ENCODE measurements at regions of chr6 and their contacts with region 1.

Region 1: DNA sequence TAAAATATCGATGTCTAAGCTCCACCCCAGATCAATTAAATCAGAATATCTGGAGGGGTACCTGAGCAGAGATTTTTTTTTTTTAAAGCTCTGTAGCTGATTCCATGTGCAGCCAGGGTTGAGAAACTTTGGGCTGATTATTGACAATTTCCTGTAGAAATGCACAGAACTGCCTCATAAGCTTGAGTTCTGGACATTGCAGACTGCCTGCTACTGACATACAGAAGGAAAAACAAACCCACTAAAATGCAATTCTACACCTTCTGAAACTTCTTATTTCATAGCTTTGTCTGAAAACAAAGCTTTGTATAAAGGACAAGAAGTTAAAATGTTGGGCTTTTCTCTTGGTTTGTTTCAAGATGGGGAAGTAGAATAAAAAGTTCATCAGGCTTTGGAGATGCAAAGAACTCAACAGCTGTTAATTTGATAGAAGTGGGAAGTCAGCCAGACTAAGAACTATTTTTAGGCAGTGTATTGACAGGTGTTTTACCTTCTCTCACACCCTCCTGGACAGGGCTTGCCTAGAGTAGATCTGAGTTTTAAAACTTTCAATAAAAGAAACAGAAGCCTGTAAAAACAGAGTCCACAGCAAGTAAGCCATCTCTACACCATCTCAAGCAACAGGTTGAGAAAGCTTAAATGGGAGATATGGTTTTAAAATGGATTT is 147.7 kb downstream of the KCNQ5 start:
- DNase-seq: no peak
- ATAC-seq: peak; percentile 58
- H3K4me3 ChIP-seq: no peak overlapping the region
- H3K27ac ChIP-seq: no peak overlapping the region
- H3K4me1 ChIP-seq: peaks cover 11% of the 10 kb centered on the region
- H3K27me3 ChIP-seq: no peaks in the 10 kb centered on the region
- CTCF ChIP-seq: no peak
- EP300 ChIP-seq: no peak
- POLR2A ChIP-seq: no peak
- RAD21 ChIP-seq: no peak

Region 2: DNA sequence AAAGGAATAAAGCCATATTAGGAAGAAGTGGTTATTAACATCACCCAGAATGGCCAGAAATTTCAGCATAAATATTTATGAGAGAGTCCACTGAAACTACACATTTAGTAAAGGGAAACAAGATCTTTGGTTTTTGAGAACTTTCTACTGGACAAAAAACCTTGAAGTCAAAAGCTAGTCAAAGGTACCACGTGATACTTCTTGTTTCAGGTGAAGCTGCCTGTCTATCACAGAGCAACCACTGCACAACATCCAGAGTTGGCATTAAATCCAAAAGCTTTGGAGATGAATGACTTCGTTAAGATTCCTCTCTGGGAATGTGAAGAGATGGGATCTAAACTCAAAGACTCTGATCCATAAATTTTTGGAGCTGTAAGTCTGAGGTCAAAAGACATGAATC is 10.7 kb before region 1 on chr6:
- CTCF ChIA-PET with region 1: interaction called, 8 read pairs
- POLR2A ChIA-PET with region 1: no interaction called
- RAD21 ChIA-PET with region 1: interaction called, 3 read pairs
- SMC1A ChIA-PET with region 1: interaction called, 10 read pairs
- in situ Hi-C with region 1: no loop called
- intact Hi-C with region 1: no loop called
- DNase-seq: no peak
- ATAC-seq: peak; percentile 49
- H3K4me3 ChIP-seq: no peak overlapping the region
- H3K27ac ChIP-seq: no peak overlapping the region
- H3K4me1 ChIP-seq: no peaks in the 10 kb centered on the region; the same call in 1 of the 2 replicates
- H3K27me3 ChIP-seq: no peaks in the 10 kb centered on the region
- CTCF ChIP-seq: no peak
- EP300 ChIP-seq: no peak
- POLR2A ChIP-seq: no peak
- RAD21 ChIP-seq: no peak

Region 3: GRCh38 chr6:72783666-72784065 is 14.1 kb after region 1 on chr6:
- CTCF ChIA-PET with region 1: interaction called, 3 read pairs
- POLR2A ChIA-PET with region 1: no interaction called
- RAD21 ChIA-PET with region 1: no interaction called
- SMC1A ChIA-PET with region 1: interaction called, 20 read pairs
- in situ Hi-C with region 1: no loop called
- intact Hi-C with region 1: no loop called
- DNase-seq: no peak
- ATAC-seq: no peak
- H3K4me3 ChIP-seq: no peak overlapping the region
- H3K27ac ChIP-seq: no peak overlapping the region
- H3K4me1 ChIP-seq: no peaks in the 10 kb centered on the region; the same call in 1 of the 2 replicates
- H3K27me3 ChIP-seq: no peaks in the 10 kb centered on the region
- CTCF ChIP-seq: no peak
- EP300 ChIP-seq: no peak
- POLR2A ChIP-seq: no peak
- RAD21 ChIP-seq: no peak

Measured in GM12878 (cell line).